Ascending aorta (tissue), 2 donors: ENCODE measurements at regions of chr2 and their contacts with region 1.

Region 1: DNA sequence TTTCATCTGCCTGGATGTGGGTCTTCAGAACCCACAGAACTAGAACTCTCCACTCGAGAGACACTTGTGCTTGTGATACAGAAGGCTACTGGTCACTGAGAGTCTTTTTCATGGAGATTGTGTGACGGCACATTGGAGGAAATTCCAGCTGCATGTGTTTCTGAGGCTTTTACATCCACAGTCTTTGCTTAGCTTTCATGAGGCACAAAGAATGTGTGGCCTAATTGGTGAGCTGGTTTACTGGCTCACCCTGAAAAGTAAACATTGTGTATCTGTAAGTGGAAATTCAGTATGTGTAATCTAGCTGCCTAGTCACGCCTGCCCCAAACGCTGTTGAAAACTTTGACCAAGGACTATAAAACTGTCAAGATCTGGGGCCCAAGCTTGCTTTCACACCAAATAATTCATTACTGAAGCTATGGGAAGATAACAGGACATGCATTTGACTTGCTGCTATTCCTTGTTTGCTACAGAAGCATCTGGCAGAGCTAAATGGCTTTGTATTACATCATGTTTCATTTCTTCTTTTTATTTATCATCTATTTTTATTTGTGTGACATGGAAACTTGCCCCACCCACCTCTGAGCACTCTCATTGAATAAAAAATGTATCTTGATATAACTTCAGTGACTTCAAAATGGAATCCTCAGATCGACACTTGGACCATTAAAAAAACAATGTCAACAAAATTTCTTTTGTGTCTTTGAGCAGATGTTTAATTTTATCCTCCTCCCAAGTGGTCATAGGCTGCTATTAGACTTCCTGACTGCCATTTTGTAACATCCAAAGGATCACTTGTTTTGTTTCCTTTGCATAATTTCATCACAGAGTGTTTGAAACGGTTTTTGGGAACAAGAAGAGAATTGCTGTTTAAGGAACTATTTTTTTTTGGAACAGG is 80.2 kb downstream of the EFEMP1 start:
- DNase-seq: no peak
- H3K4me3 ChIP-seq: no peak overlapping the region
- H3K27ac ChIP-seq: peak overlapping the region in 1 of 2 donors; percentile 17
- H3K4me1 ChIP-seq: peaks cover 0 to 5% of the 10 kb centered on the region in 2 donors
- H3K27me3 ChIP-seq: no peaks in the 10 kb centered on the region
- CTCF ChIP-seq: no peak

Region 2: DNA sequence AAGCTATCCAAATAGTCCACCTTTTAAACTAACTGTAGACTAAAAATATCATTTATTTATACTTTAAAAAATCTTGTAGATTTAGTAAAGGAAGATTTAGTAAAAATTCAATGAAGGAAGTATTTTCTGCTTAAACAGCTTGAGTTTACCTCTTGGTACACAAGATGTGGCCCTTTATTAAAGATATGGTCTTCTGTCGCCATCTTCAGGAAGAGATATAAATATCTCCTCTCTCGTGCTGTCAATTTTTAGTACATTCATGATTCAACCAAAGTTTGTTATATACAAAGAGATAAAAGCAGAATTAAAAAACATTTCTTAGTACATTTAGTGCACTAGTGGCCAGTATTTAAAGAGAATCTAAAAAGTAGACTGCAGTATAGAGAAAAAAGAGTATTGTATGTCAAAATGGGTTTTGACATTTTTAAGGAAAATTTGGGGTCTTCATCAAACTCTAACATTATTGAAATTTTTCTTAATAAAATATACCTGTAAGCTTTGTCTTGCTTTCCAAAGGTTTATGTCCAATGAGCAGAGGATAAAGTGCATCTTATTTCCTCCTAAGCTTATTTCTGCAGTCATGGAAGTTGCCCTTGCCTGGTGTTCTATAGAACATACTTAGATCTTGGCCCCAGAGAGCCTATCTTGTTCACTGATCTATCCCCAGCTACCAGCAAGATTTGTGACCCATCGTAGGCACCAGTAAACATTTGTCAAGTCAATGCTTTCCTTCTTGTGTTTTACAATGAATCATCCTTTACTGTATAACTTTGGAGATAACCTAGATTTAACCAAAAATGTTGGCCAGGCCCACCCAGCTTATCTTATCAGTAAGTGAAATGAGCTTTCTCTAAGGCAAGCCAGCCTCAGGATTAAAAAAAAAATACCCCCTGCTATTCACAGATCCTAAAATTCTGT is 1138.4 kb before region 1 on chr2:
- intact Hi-C with region 1: no loop called
- DNase-seq: no peak
- H3K4me3 ChIP-seq: no peak overlapping the region
- H3K27ac ChIP-seq: no peak overlapping the region
- H3K4me1 ChIP-seq: peaks cover 0 to 7% of the 10 kb centered on the region in 2 donors
- H3K27me3 ChIP-seq: no peaks in the 10 kb centered on the region
- CTCF ChIP-seq: peak; percentile 52 to 66 (median 58)

Region 3: DNA sequence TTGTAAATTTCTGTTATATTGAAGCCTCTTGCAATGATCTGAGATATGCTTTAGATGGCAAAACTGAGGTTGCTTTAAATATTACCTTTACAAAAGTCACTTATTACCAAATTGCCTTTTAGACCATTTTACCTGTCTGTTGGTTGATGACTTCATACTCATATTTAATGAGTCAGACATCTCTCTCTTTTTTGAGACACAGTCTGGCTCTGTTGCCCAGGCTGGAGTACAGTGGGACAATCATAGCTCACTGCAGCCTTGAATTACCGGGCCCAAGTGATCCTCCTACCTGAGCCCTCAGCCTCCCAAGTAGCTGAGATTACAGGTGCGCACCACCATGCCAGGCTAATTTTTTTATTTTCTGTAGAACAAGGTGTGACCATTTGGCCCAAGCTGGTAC is 214.4 kb before region 1 on chr2:
- intact Hi-C with region 1: no loop called
- DNase-seq: no peak
- H3K4me3 ChIP-seq: no peak overlapping the region
- H3K27ac ChIP-seq: no peak overlapping the region
- H3K4me1 ChIP-seq: no peaks in the 10 kb centered on the region
- H3K27me3 ChIP-seq: no peaks in the 10 kb centered on the region
- CTCF ChIP-seq: no peak

Region 4: DNA sequence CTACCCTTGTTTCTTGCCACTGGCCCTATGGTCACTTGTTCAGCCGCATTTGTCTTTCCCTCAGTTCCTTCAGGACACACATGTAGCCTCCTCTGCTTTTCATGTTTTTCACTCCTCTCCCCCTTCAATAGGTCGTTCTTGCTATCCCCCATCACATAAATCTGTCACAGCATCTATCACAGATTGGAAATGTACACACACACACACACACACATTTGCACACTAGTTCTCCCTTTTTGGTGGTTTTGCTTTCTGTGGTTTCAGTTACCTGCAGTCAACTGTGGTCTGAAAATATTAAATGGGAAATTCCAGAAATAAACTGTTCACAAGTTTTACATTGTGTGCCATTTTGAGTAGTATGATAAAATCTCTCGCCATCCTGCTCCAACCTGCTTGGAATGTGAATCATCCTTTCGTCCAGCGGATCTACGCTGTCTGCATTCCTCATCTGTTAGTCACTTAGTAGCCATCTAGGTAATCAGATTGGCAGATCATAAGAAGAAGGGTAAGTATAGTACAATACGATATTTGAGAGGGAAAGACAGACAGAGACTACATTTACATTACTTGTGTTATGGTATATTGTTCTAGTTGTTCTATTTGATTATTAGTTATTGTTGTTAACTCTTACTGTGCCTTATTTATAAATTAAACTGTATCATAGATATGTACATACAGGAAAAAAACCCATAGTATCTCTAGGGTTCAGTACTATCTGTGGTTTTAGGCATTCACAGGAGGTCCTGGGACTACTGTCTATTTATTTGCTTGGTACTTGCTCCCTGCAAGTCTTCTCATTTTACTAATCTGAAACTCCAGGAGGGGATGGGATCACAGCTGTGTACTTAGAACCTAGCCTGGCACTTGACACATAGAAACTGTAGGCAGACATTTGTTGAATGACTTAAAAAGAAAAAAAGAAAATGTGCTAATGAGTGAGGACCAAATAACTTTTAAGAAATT is 63.6 kb before region 1 on chr2:
- intact Hi-C with region 1: loop called (anchors 5 kb)
- DNase-seq: no peak
- H3K4me3 ChIP-seq: no peak overlapping the region
- H3K27ac ChIP-seq: no peak overlapping the region
- H3K4me1 ChIP-seq: no peaks in the 10 kb centered on the region
- H3K27me3 ChIP-seq: no peaks in the 10 kb centered on the region
- CTCF ChIP-seq: no peak

Region 5: DNA sequence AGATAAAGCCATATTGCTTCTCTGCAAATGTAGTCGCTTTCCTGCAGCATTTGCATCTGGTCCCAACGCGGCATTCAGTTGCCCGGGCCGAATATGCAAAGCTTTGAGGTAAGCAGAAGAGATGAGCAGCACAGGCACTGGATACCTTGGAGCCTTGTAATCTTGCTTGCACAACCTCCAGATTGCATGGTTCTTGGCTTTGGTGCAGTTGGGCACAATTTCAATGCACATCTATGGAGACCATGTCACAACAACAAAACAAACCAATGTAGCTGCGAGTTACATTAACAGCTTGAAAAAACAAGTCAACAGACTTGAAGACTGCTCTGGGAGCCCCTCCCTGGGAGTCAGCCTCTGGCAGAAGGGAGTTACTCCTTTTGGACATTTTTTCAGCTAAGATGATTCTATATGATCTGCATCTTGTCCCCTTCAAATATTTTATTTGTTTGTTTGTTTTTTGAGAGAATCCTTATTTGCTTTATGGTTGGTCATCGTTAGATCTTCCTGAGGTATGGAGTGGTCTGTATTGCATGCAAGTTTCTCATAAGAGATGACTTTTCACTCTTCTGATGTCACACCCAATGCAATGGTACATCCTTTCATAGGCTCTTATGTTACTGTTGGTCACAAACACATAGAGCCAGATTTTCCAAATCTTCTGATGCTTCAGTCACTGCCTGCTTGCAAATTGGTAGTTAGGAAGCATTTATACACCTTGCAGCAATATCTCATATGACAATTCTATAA is 33.3 kb before region 1 on chr2:
- intact Hi-C with region 1: loop called (anchors 5 kb)
- DNase-seq: no peak
- H3K4me3 ChIP-seq: no peak overlapping the region
- H3K27ac ChIP-seq: no peak overlapping the region
- H3K4me1 ChIP-seq: peaks cover 3 to 17% of the 10 kb centered on the region in 2 donors
- H3K27me3 ChIP-seq: no peaks in the 10 kb centered on the region
- CTCF ChIP-seq: no peak

Region 6: GRCh38 chr2:56239437-56239836 is 396.1 kb after region 1 on chr2:
- intact Hi-C with region 1: no loop called
- DNase-seq: no peak
- H3K4me3 ChIP-seq: no peak overlapping the region
- H3K27ac ChIP-seq: no peak overlapping the region
- H3K4me1 ChIP-seq: no peaks in the 10 kb centered on the region
- H3K27me3 ChIP-seq: no peaks in the 10 kb centered on the region
- CTCF ChIP-seq: no peak

Region 7: DNA sequence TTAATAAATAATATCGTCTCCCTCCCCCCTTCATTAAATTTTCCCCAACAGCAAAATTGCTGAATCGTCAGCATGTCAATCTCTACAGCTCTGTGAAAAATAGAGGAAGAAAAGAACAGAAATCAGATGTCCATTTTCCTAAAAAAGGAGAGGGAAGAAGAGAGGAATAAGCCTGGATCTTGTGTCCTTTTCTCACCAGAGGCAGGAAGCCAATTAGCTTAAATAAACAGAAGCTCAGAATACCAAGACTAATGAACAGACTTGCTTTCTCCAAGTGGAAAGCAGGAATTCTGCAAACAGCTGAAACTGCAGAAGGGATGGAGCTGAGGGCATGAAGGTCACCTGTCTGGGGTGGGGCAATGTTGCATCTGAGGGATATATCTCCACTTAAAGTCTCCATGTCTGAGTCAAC is 606.1 kb after region 1 on chr2:
- intact Hi-C with region 1: no loop called
- DNase-seq: no peak
- H3K4me3 ChIP-seq: no peak overlapping the region
- H3K27ac ChIP-seq: no peak overlapping the region
- H3K4me1 ChIP-seq: no peaks in the 10 kb centered on the region
- H3K27me3 ChIP-seq: no peaks in the 10 kb centered on the region
- CTCF ChIP-seq: no peak